Naive thymus-derived CD4-positive, alpha-beta T cell (primary cell): ENCODE measurements at regions of chr11 and their contacts with region 1.

Region 1: DNA sequence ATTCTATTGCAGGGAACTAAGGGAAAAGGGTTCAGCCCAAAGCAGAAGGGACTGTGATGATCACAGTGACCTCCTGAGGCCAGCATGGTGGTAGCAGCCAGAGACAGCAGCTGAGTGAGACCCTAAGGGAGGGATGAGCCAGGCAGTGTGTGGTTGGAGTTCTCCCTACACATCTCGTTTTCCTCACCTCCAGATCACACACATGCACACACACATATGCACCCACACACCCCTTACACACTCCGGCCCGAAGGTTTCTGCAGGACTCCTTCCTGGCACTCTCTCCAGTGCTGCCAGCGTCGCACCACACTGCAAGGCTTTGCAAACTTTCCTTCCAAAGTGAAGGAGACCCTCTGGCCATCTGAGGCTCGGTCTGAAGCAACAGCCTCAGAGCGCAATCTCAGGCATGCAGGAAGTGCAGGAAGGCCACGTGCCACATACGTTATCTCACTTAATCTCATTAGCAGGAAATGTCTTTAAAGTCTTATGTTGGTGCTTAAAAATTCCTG is 26.8 kb upstream of the TP53I11 start:
- DNase-seq: peak in 4 of 9 donors; percentile 11 to 30 (median 22)
- ATAC-seq: peak; percentile 39
- H3K4me3 ChIP-seq: no peak overlapping the region
- H3K4me3 Mint-ChIP-seq: peak overlapping the region in 2 of 10 donors; percentile 64 to 71
- H3K27ac ChIP-seq: no peak overlapping the region
- H3K27ac Mint-ChIP-seq: peak overlapping the region in 3 of 9 donors; percentile 7 to 33 (median 30)
- H3K4me1 ChIP-seq: peaks cover 23 to 47% of the 10 kb centered on the region in 2 donors
- H3K4me1 Mint-ChIP-seq: peaks cover 0 to 12% (median 4%) of the 10 kb centered on the region in 7 donors
- H3K27me3 ChIP-seq: no peaks in the 10 kb centered on the region
- H3K27me3 Mint-ChIP-seq: no peaks in the 10 kb centered on the region

Region 2: DNA sequence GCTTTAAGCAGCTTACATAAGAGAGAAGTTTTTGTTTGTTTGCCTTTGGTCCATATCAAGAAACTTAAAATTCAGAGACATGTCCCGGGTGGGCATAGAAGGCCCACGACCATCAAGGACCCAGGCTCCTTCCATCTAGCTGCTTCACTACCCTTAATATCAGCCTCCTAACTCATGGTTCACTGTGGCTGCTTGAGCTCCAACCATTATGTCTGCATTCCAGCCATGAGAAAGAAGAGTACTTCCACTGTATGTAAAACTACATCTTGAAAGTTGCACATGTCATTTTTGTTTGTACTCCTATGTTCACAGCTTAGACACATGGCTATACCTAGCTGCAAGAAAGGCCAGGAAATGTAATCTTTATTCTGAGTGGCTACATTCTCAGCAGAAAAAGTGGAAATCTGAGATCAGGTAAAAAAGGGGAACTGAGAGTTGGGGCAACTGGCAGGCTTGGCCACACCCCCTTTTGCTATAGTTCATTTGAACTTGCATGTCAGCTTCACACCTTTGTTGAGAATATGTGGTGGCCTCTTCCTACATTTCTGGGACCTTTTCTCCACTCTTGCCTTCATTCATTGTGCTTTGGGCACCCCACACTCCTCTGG is 54.5 kb after region 1 on chr11:
- CTCF ChIA-PET with region 1: no interaction called
- POLR2A ChIA-PET with region 1: no interaction called
- intact Hi-C with region 1: loop called in 1 of 2 experiments (anchors 10 kb)
- DNase-seq: no peak
- ATAC-seq: peak; percentile 44
- H3K4me3 ChIP-seq: no peak overlapping the region
- H3K4me3 Mint-ChIP-seq: no peak overlapping the region
- H3K27ac ChIP-seq: no peak overlapping the region
- H3K27ac Mint-ChIP-seq: peak overlapping the region in 1 of 9 donors; percentile 48
- H3K4me1 ChIP-seq: no peaks in the 10 kb centered on the region
- H3K4me1 Mint-ChIP-seq: peaks cover 0 to 11% (median 0%) of the 10 kb centered on the region in 7 donors
- H3K27me3 ChIP-seq: no peaks in the 10 kb centered on the region
- H3K27me3 Mint-ChIP-seq: peaks cover 0 to 17% (median 0%) of the 10 kb centered on the region in 5 donors